PC-9 (cell line): ENCODE measurements at regions of chr16 and their contacts with region 1.

Region 1: DNA sequence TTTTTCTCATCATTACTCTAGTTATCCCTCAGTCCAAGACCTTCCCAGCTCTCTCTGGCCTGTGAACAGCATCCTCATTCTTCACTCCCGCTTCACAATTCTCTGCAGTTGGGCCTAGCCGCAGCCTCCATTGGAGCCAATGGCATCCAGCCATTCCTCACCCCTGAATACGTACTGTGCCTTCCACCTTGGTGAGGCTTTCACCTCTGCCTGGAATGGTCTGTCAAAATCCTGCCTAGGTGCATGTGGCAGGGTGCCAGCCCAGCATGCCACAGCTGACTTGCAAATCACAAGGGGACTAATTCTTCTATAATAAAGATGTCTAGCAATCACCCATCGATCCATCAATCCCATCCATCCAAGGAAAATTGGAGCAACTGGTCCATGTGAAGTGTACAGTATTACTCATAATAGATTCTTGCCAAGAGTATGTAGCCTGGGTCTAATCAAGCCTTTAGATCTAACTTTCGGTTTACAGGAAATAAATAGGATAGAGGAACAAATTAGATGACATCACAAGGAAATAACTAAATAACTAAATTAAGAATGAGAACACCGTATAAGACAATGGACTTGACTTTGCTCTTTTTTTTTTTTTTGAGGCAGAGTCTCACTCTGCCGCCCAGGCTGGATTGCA is 5.1 kb upstream of the CX3CL1 start:
- DNase-seq: peak; percentile 43 to 94
- H3K4me3 ChIP-seq: no peak overlapping the region
- H3K27ac ChIP-seq: peak overlapping the region; percentile 50; the same call in 1 of the 2 replicates
- H3K4me1 ChIP-seq: peaks cover 16% of the 10 kb centered on the region
- H3K27me3 ChIP-seq: no peaks in the 10 kb centered on the region
- CTCF ChIP-seq: no peak

Region 2: GRCh38 chr16:56734429-56734828 is 632.8 kb before region 1 on chr16:
- CTCF ChIA-PET with region 1: no interaction called
- POLR2A ChIA-PET with region 1: interaction called, 11 read pairs
- intact Hi-C with region 1: no loop called
- DNase-seq: no peak
- H3K4me3 ChIP-seq: no peak overlapping the region
- H3K27ac ChIP-seq: no peak overlapping the region
- H3K4me1 ChIP-seq: peaks cover 11% of the 10 kb centered on the region
- H3K27me3 ChIP-seq: no peaks in the 10 kb centered on the region
- CTCF ChIP-seq: no peak